ENCODE measurements at regions of chr16 and their contacts with region 1.

Region 1: GRCh38 chr16:7209598-7209997 is 123.0 kb upstream of the RBFOX1 start:
- DNase-seq: no peak
- H3K4me3 ChIP-seq: no peak overlapping the region
- H3K27ac ChIP-seq: no peak overlapping the region
- H3K27me3 ChIP-seq: peaks cover 0 to 10% (median 0%) of the 10 kb centered on the region in 45 donors
- CTCF ChIP-seq: no peak

Region 2: DNA sequence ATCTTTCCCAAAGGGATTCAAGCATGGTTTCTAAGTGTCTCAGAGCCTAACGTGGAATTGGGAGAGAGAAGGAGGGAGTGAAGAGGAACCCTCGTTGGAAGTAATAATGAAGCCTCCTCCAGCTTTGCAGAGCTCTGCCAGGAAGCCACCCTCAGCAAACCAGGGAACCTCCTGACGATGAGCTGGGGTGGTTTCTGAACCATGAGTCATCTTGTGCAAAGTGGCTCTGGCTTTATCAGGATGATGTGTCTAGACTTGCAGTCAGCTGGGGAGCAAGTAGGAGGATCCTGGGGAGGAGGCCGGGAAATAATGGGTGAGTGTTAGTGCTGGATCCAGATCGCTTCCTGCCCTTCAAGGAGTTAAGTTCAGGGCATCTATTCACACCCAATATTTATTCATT is 68.7 kb before region 1 on chr16:
- intact Hi-C with region 1: loop called in 1 of 2 experiments (anchors 10 kb)
- DNase-seq: peak in 8 of 10 donors; percentile 27 to 69 (median 47)
- H3K4me3 ChIP-seq: no peak overlapping the region
- H3K27ac ChIP-seq: no peak overlapping the region
- H3K27me3 ChIP-seq: peaks cover 0 to 3% (median 0%) of the 10 kb centered on the region in 45 donors
- CTCF ChIP-seq: no peak

Measured in dorsolateral prefrontal cortex (tissue), 120 donors.